Activated CD4-positive, alpha-beta T cell treated with anti-CD3 and anti-CD28 coated beads for 36 hours (primary cell): ENCODE measurements at regions of chr14 and their contacts with region 1.

Region 1: GRCh38 chr14:33792720-33793368 is 158.0 kb downstream of the EGLN3 start:
- DNase-seq: peak; percentile 84
- ATAC-seq: peak; percentile 47
- H3K4me3 Mint-ChIP-seq: no peak overlapping the region
- H3K27ac Mint-ChIP-seq: no peak overlapping the region
- H3K4me1 Mint-ChIP-seq: peaks cover 16% of the 10 kb centered on the region
- H3K27me3 Mint-ChIP-seq: peaks cover 26% of the 10 kb centered on the region

Region 2: DNA sequence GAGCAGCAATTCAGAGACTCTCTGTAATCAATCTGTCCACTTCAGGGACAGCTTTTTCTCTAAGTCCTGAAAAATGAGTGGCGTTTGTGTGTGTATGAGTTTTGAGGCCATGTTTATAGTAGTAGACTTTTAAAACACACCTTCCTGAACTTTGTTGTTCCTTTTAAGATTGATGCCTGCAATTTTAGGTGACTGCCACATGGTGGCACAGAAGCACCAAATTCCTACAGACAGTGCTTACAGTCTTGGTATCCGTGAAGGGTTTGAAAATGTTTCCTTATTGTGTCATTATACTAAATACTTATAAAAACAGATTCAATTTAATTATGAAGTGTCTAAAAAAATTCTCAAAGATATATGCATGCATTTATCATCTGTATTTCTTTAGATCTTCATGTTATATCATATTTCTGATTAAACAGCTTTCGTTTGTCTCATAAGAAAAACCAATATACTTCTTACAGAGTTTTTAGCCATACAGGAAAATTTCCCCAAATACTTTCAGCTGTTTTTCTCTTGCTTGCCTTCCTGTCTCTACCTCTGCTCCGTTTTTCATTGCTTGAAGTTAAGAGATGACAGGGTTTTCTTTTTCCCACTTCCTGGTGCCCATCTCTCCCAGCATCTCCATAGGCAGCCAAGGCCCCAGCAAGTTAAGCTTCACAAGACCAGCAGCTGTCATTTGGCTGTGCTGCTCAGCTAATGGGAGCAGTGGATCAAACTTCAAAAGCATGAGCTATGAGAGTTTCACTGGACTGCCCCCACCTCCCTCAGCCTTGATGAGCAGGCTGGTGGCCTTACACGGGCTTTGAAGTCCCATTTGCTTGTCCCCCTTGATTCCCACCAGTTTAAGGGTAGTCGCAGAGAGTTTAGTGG is 1204.2 kb before region 1 on chr14:
- CTCF ChIA-PET with region 1: interaction called, 10 read pairs
- POLR2A ChIA-PET with region 1: no interaction called
- intact Hi-C with region 1: no loop called
- DNase-seq: peak; percentile 11
- ATAC-seq: no peak
- H3K4me3 Mint-ChIP-seq: no peak overlapping the region
- H3K27ac Mint-ChIP-seq: no peak overlapping the region
- H3K4me1 Mint-ChIP-seq: no peaks in the 10 kb centered on the region
- H3K27me3 Mint-ChIP-seq: peaks cover 7% of the 10 kb centered on the region

Region 3: DNA sequence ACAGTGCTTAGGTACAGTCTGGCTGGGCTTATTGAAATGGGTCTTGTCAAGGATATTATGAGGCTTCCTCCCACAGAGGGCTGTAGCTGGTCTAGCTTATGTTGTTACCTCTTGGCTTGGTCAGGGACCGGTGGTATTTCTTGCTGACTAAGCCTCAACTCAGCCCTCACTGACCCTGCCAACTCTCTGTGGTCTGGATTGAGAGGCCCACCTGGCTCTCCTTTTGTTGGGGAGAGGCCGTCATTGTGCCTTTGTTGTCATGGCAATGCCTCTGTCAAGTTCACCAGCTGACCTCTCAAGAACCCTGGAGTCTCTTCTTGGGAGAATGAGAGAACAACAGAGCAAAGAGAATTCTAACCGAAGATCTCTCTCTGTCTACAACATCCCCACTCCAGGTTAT is 1099.7 kb before region 1 on chr14:
- CTCF ChIA-PET with region 1: no interaction called
- POLR2A ChIA-PET with region 1: no interaction called
- intact Hi-C with region 1: no loop called
- DNase-seq: no peak
- ATAC-seq: no peak
- H3K4me3 Mint-ChIP-seq: no peak overlapping the region
- H3K27ac Mint-ChIP-seq: no peak overlapping the region
- H3K4me1 Mint-ChIP-seq: no peaks in the 10 kb centered on the region
- H3K27me3 Mint-ChIP-seq: no peaks in the 10 kb centered on the region

Region 4: DNA sequence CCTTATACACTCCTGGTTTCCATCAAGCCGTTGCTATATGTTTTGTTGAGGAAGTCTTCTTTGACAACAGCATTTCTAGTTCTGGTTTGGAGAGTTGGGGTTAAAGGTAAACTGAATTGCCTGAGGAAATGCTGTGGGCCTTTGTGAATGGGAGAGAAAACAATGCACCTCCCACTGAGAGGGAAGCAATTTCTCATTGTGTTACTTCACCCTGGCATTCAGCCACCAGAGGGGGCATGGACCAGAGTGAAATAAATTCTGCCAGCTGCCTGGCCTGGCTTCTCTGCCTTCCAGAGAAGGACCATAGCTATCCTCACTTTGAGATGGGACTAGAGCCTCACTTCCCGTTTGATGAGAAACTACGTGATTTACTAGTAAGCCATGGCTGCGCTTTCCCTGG is 317.2 kb before region 1 on chr14:
- CTCF ChIA-PET with region 1: interaction called, 8 read pairs
- POLR2A ChIA-PET with region 1: no interaction called
- intact Hi-C with region 1: loop called (anchors 2 to 5 kb)
- DNase-seq: peak; percentile 37
- ATAC-seq: no peak
- H3K4me3 Mint-ChIP-seq: no peak overlapping the region
- H3K27ac Mint-ChIP-seq: no peak overlapping the region
- H3K4me1 Mint-ChIP-seq: no peaks in the 10 kb centered on the region
- H3K27me3 Mint-ChIP-seq: peaks cover 6% of the 10 kb centered on the region

Region 5: DNA sequence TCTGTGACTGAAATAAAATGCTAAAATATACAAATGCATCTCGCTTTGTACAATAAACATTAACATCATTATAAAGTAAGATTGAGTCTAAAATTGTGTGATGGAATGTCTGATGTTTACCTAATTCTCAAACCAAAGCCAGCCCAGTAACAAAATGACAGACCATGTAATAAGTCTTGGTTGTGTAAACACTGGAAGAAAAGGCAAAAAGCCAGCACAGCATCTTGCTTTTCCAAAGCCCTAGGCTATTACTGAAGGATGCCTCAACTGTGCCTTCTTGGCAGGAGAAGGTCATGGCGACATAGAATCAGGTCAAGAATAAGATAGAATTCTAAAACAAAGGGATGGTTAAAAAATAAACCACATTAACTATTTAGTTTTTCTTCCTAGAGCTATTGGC is 11.6 kb before region 1 on chr14:
- CTCF ChIA-PET with region 1: interaction called, 11 read pairs
- POLR2A ChIA-PET with region 1: no interaction called
- intact Hi-C with region 1: no loop called
- DNase-seq: no peak
- ATAC-seq: no peak
- H3K4me3 Mint-ChIP-seq: no peak overlapping the region
- H3K27ac Mint-ChIP-seq: no peak overlapping the region
- H3K4me1 Mint-ChIP-seq: no peaks in the 10 kb centered on the region
- H3K27me3 Mint-ChIP-seq: peaks cover 6% of the 10 kb centered on the region